ENCODE measurements at regions of chr4 and their contacts with region 1.

Region 1: GRCh38 chr4:102244877-102245535 is 100.3 kb downstream of the SLC39A8 start:
- DNase-seq: no peak
- H3K4me3 ChIP-seq: no peak overlapping the region
- H3K27ac ChIP-seq: no peak overlapping the region
- H3K4me1 ChIP-seq: no peaks in the 10 kb centered on the region
- H3K27me3 ChIP-seq: no peaks in the 10 kb centered on the region
- CTCF ChIP-seq: no peak
- EP300 ChIP-seq: no peak
- POLR2A ChIP-seq: no peak

Region 2: DNA sequence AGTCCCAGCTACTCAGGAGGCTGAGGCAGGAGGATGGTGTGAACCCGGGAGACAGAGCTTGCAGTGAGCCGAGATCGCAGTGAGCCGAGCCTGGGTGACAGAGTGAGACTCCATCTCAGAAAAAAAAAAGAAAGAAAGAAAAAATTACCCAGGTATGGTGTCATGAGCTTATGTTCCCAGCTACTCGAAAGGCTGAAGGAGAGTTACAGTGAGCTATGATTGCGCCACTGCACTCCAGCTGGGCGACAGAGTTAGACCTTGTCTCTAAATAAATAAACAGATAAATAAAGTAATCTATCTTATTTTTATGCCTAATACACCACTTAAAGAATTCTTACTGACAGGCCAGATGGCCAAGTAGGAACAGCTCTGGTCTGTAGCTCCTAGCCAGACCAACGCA is 27.3 kb after region 1 on chr4:
- in situ Hi-C with region 1: no loop called
- intact Hi-C with region 1: loop called (anchors 2 kb)
- DNase-seq: no peak
- H3K4me3 ChIP-seq: no peak overlapping the region
- H3K27ac ChIP-seq: no peak overlapping the region
- H3K4me1 ChIP-seq: no peaks in the 10 kb centered on the region
- H3K27me3 ChIP-seq: no peaks in the 10 kb centered on the region
- CTCF ChIP-seq: no peak
- EP300 ChIP-seq: no peak
- POLR2A ChIP-seq: no peak

Region 3: GRCh38 chr4:102404431-102405028 is 159.5 kb after region 1 on chr4:
- in situ Hi-C with region 1: no loop called
- intact Hi-C with region 1: no loop called
- DNase-seq: no peak
- H3K4me3 ChIP-seq: no peak overlapping the region
- H3K27ac ChIP-seq: peak overlapping the region in 1 of 4 donors; percentile 12
- H3K4me1 ChIP-seq: no peaks in the 10 kb centered on the region
- H3K27me3 ChIP-seq: no peaks in the 10 kb centered on the region
- CTCF ChIP-seq: no peak
- EP300 ChIP-seq: no peak
- POLR2A ChIP-seq: no peak